ENCODE measurements at regions of chr10 and their contacts with region 1.

Region 1: DNA sequence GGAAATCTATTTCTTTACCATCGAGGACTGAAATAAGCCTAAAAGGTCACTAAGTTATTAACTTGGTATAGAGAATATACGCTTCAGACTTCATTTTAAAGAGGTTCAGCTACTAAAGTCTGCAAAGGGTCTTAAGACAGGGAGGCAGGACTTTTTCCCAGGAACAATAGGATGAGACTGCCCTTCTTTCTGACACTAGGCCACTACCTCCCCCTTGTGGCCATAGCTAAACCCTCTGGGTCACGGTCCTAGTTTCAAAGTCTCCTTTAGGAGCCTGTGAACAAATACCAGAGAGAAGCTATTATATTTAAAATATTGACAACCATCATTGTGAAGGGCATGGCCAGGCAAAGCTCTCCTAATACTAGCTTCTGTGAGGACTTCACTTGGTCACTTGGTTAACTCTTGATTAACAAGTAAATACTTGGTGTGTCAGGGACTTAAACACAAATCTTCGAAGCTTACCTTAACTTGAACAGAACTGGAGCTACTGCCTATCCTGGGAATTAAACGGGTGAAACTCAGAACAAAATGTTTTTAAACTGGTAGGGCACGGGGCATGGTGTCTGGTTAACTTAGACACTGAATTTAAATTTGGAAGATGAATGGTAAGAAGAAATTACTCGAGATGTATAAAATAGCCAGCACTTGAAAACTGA is 75.6 kb downstream of the CCDC6 start:
- DNase-seq: no peak
- H3K4me3 ChIP-seq: no peak overlapping the region
- CTCF ChIP-seq: peak in 1 of 3 donors; percentile 17
- POLR2A ChIP-seq: no peak

Region 2: DNA sequence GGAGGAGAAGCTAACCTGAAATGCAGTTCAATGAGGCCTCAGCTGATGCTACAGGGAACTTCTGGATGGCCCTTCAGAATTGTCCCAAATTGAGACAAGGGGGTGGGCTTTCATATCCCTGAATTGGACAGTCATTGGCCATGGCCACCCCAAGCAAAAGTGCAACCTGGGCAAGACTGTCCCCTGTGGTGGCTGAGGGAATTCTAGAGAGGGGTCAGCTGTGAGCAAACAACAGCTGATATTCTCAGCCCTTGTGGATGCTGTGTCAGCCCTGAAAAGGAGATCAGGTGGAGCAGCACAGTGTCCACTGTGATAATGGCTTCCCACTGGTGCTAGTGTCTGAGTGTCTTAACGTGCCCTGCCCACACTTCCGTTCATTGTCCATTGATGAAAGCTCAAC is 197.7 kb before region 1 on chr10:
- intact Hi-C with region 1: loop called (anchors 10 kb)
- DNase-seq: no peak
- H3K4me3 ChIP-seq: no peak overlapping the region
- CTCF ChIP-seq: no peak
- POLR2A ChIP-seq: no peak

Region 3: GRCh38 chr10:59748834-59749233 is 81.9 kb before region 1 on chr10:
- intact Hi-C with region 1: no loop called
- DNase-seq: no peak
- H3K4me3 ChIP-seq: no peak overlapping the region
- CTCF ChIP-seq: no peak
- POLR2A ChIP-seq: no peak

Region 4: DNA sequence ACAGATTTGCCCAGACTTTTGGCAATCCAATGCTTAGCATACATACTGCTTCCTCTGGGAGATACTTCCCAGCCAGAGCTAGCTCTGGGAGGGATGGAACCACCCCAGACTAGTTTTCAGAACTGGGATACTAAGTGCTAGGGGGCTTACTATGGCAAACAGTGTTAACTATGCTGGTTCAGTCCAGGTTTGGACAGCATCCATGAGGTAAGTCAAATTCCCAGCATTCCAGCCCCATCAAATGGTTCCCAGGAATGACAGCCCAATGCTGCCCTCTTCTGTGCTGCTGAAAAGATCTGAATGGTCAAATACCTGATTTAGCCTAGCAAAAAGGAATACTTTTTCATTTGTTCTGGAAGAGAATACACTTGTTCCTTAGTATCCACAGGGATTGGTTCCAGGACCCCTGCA is 217.4 kb after region 1 on chr10:
- intact Hi-C with region 1: loop called (anchors 10 kb)
- DNase-seq: no peak
- H3K4me3 ChIP-seq: no peak overlapping the region
- CTCF ChIP-seq: no peak
- POLR2A ChIP-seq: no peak

Region 5: DNA sequence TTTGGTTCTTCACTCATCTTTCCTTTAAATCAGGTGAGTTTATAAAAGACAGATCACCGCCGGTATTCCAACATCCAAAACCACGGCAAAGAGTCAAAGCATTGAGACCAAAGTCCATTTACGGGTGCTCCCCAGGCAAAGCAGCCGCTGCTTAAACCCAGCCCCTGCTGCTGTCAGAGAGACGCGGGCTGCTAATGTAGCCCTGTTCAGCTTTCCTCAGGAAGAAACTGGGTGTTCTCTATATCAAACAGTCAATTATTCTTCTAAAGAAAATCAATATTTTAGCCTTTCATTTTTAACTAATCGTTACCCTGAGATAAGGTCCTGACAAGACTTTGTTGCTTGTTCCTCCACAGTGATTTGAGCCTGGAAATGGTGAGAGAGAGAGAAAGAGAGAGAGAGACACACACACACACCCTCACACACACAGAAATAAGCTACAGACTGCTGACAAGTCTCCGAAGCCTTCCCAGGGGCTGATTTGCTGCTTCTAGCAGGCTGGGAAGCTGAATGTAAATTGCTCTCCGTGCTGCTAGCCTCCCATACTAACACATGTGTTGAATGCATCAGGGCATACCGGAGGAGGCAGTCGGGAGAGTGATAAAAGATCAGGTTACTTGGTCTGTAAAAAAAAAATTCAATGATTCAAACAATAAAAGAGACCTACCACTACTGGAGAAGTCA is 741.9 kb after region 1 on chr10:
- intact Hi-C with region 1: no loop called
- DNase-seq: no peak
- H3K4me3 ChIP-seq: no peak overlapping the region
- CTCF ChIP-seq: no peak
- POLR2A ChIP-seq: no peak

Region 6: GRCh38 chr10:61120805-61121204 is 1290.1 kb after region 1 on chr10:
- intact Hi-C with region 1: no loop called
- DNase-seq: no peak
- H3K4me3 ChIP-seq: no peak overlapping the region
- CTCF ChIP-seq: no peak
- POLR2A ChIP-seq: no peak